ENCODE measurements at regions of chr13 and their contacts with region 1.

Region 1: DNA sequence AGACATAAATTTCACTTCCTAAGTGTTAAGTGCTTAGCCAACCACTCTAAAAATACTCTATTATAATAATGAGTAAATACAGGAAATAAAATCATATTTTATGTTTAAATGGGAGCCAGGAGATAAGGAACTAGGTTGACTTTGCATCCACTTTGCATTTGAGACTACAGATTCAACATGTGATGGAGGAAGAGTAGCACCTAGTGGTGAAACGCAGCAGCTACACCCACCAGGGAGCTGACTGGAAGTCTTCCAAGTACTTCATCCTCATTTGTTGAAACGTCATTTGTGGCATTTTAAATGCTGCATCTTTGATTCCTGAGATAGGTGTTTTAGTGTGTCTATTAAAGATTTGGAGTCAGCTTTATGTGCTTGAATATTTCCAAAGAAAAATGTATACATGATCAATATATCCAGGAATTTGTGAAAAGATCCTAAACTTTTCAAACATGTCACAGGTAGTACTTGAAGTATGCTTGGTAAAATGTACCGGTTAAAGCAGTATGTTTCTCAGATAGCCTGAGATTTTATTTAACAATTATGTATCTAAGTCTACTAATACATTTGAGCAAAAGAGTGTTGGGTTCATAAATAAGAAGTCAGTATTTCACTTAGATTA is 17.4 kb upstream of the KCTD12 start:
- DNase-seq: peak; percentile 38 to 78 (median 71)
- ATAC-seq: peak; percentile 92
- H3K4me3 ChIP-seq: no peak overlapping the region
- H3K4me3 Mint-ChIP-seq: no peak overlapping the region
- H3K27ac ChIP-seq: no peak overlapping the region
- H3K27ac Mint-ChIP-seq: no peak overlapping the region
- H3K4me1 ChIP-seq: no peaks in the 10 kb centered on the region
- H3K4me1 Mint-ChIP-seq: no peaks in the 10 kb centered on the region
- H3K27me3 ChIP-seq: no peaks in the 10 kb centered on the region
- H3K27me3 Mint-ChIP-seq: peaks cover 14% of the 10 kb centered on the region
- CTCF ChIP-seq: peak; percentile 99

Region 2: GRCh38 chr13:75372517-75372916 is 1531.1 kb before region 1 on chr13:
- CTCF ChIA-PET with region 1: no interaction called
- POLR2A ChIA-PET with region 1: no interaction called
- intact Hi-C with region 1: loop called (anchors 5 kb)
- DNase-seq: peak in 2 of 9 experiments; percentile 41 to 60
- ATAC-seq: peak; percentile 80
- H3K4me3 ChIP-seq: no peak overlapping the region
- H3K4me3 Mint-ChIP-seq: no peak overlapping the region
- H3K27ac ChIP-seq: no peak overlapping the region
- H3K27ac Mint-ChIP-seq: no peak overlapping the region
- H3K4me1 ChIP-seq: no peaks in the 10 kb centered on the region
- H3K4me1 Mint-ChIP-seq: no peaks in the 10 kb centered on the region
- H3K27me3 ChIP-seq: no peaks in the 10 kb centered on the region
- H3K27me3 Mint-ChIP-seq: peaks cover 3% of the 10 kb centered on the region
- CTCF ChIP-seq: peak; percentile 80

Region 3: DNA sequence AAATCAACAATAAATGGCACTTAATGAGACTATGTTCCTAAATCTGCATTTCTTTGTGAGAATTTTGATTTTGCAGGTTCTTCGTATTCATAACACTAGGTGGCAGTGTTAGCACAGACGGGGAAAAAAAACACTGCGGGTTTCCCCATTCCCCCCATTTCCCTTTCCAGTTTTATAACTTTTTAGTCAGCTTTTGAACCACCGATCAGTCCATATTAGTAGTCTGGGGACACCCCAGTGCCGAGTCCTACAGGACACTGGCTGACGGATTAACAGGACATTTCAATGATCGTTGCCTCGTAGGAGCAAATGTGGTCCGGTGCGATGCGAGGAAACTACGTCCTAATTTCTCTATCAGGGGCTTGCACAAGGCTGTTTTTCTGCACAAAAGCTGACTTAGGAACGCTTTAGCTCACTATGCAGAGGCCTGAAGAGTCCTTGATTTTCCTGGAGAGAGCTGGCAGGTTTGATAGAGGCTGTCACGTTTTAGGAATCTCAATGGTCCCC is 1033.2 kb before region 1 on chr13:
- CTCF ChIA-PET with region 1: interaction called, 25 read pairs
- POLR2A ChIA-PET with region 1: no interaction called
- intact Hi-C with region 1: no loop called
- DNase-seq: peak in 4 of 9 experiments; percentile 3 to 54 (median 18)
- ATAC-seq: peak; percentile 62
- H3K4me3 ChIP-seq: peak overlapping the region; percentile 3 to 29
- H3K4me3 Mint-ChIP-seq: peak overlapping the region; percentile 76
- H3K27ac ChIP-seq: peak overlapping the region in 1 of 2 experiments; percentile 0
- H3K27ac Mint-ChIP-seq: peak overlapping the region; percentile 62
- H3K4me1 ChIP-seq: no peaks in the 10 kb centered on the region
- H3K4me1 Mint-ChIP-seq: peaks cover 17% of the 10 kb centered on the region
- H3K27me3 ChIP-seq: no peaks in the 10 kb centered on the region
- H3K27me3 Mint-ChIP-seq: peaks cover 5% of the 10 kb centered on the region
- CTCF ChIP-seq: peak; percentile 89

Region 4: GRCh38 chr13:76473552-76474134 is 430.0 kb before region 1 on chr13:
- CTCF ChIA-PET with region 1: interaction called, 4 read pairs
- POLR2A ChIA-PET with region 1: no interaction called
- intact Hi-C with region 1: loop called (anchors 1 to 5 kb)
- DNase-seq: peak; percentile 25 to 77 (median 68)
- ATAC-seq: peak; percentile 88
- H3K4me3 ChIP-seq: no peak overlapping the region
- H3K4me3 Mint-ChIP-seq: no peak overlapping the region
- H3K27ac ChIP-seq: no peak overlapping the region
- H3K27ac Mint-ChIP-seq: no peak overlapping the region
- H3K4me1 ChIP-seq: no peaks in the 10 kb centered on the region
- H3K4me1 Mint-ChIP-seq: no peaks in the 10 kb centered on the region
- H3K27me3 ChIP-seq: no peaks in the 10 kb centered on the region
- H3K27me3 Mint-ChIP-seq: peaks cover 8% of the 10 kb centered on the region
- CTCF ChIP-seq: peak; percentile 78

Region 5: DNA sequence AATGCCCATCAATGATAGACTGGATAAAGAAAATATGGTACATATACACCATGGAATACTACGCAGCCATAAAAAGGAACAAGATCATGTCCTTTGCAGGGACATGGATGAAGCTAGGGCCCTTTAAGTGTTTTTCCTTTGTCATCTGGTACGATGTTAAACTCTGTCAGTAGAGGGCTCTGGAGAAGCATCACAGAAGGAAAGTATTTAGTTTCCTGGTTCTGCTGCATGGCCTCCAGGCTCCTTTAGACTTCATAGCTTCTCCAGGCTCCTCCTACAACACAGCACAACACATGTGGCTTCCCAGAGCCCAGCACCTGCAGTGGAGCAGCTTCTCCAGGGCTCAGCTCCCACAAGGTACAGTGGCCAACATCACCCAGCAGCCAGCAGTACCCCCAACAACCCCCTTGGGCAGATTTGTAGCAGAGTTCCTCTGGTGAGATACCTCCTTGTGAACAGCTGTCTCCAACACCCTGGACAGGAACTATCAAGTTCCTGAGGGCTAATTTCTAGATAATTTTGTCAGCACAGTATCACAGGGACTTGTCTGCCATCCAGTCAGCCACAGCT is 80.9 kb before region 1 on chr13:
- CTCF ChIA-PET with region 1: interaction called, 10 read pairs
- POLR2A ChIA-PET with region 1: no interaction called
- intact Hi-C with region 1: loop called (anchors 1 to 2 kb)
- DNase-seq: peak in 2 of 9 experiments; percentile 9 to 30
- ATAC-seq: no peak
- H3K4me3 ChIP-seq: no peak overlapping the region
- H3K4me3 Mint-ChIP-seq: no peak overlapping the region
- H3K27ac ChIP-seq: no peak overlapping the region
- H3K27ac Mint-ChIP-seq: no peak overlapping the region
- H3K4me1 ChIP-seq: no peaks in the 10 kb centered on the region
- H3K4me1 Mint-ChIP-seq: no peaks in the 10 kb centered on the region
- H3K27me3 ChIP-seq: no peaks in the 10 kb centered on the region
- H3K27me3 Mint-ChIP-seq: peaks cover 2% of the 10 kb centered on the region
- CTCF ChIP-seq: no peak

Region 6: DNA sequence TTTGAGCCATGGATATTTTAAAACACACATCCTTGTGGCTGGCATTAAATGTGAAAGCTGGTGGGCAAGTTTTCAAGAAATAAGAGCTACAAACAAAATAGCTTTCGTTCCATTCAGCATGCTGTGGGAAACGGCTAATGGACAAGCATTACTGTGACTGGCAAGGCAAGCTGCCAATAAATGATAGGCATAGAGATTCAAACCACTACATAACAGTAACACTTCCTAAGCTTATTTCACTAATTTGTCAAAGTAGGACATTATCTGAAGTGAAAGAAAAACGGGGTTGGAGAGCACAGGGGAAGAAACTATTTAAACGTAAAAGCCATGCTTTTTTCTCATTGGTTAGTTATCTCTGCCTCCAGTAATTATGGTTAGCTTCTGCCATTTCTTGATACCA is 1729.3 kb after region 1 on chr13:
- CTCF ChIA-PET with region 1: no interaction called
- POLR2A ChIA-PET with region 1: no interaction called
- intact Hi-C with region 1: no loop called
- DNase-seq: no peak
- ATAC-seq: no peak
- H3K4me3 ChIP-seq: no peak overlapping the region
- H3K4me3 Mint-ChIP-seq: no peak overlapping the region
- H3K27ac ChIP-seq: no peak overlapping the region
- H3K27ac Mint-ChIP-seq: no peak overlapping the region
- H3K4me1 ChIP-seq: no peaks in the 10 kb centered on the region
- H3K4me1 Mint-ChIP-seq: peaks cover 7% of the 10 kb centered on the region
- H3K27me3 ChIP-seq: no peaks in the 10 kb centered on the region
- H3K27me3 Mint-ChIP-seq: no peaks in the 10 kb centered on the region
- CTCF ChIP-seq: no peak